ENCODE measurements at regions of chr5 and their contacts with region 1.

Region 1: DNA sequence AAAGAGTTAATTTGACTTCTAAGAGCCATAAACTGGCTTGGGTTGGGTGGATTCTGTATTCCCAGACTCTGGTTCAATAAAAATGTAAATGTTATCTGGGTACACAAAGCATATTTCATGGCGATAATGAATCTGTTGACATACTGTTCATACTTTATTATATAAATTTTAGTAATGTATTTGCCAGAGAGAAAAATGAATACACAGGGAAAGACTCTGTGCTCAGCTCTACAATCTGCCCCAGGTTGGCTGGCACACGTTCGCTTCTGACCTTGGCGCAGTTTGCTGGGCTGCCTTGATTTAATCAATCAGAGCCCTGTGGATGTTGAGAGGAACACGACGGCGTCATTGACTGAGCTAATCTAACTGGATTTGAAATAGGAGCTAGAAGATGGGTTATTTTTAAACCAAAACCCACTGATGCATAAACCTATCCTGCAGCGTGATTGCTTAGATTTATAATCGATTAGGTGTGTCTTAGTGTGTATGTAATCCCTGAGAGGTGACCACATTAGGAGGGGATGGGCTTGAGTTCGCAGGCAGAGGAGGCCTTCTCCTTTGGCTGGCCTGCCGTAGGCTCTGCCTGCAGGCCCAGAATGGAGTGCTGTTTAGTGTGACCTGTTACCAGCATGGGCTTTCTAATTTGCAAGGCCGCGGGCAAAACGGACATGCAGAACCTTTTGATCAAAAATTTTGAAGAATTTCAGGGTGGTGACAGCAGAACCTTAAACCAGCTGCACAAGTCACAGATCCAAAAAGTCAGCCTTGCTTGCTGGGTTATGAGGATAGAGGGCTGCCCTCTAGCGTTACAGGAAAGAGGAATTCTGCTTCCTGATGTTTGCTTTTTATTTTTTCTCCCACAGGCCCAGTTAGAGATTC is 3.9 kb upstream of the ADCY2 start:
- DNase-seq: no peak

Region 2: DNA sequence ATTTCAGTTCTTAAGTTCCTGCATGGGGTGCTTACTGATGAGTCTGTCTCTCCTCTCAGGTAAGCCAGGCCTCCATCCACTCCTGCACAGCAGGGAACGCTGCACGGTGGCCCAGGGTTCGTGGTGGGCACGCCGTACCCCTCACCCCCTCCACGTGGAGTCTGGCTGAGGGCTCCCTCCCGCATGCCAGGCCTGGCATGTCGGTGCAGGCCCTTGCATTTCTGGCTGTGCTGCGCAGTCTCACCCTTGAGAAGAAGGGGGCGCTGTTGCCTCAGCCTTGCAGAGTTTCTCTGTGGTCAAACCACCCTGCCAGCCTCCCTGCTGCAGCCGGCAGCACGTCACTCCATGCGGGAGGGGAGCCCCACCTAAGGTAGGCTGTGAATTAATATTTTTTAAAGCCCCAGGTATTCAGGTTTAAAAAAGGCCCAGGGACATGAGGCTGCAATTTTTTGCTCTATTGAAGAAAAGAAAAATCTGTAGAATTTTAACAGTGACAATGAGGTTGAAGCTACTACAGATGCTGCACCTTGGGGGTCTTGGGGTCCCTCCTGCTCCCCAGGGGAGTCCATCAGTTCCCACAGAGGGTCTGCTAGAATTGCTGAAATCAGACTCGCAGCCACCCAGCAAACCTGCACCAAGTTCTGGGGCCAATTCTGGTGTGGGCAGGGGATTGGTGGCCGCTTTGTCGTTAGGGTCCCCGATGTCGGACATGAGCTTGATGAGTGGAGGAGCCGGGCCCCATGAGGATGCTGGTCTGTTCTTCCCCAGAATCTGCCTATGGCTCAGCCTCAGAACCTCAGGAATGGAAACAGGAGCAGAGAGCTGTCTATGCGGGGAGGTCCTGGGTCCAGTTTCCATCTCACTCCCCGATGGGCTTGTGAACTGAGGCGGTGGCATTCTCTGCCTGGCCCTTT is 626.2 kb before region 1 on chr5:
- intact Hi-C with region 1: loop called in 1 of 2 experiments (anchors 10 kb)
- DNase-seq: peak; percentile 93

Region 3: GRCh38 chr5:7124959-7125358 is 267.1 kb before region 1 on chr5:
- intact Hi-C with region 1: no loop called
- DNase-seq: no peak

Region 4: GRCh38 chr5:7317751-7318150 is 74.3 kb before region 1 on chr5:
- intact Hi-C with region 1: no loop called
- DNase-seq: no peak

Region 5: DNA sequence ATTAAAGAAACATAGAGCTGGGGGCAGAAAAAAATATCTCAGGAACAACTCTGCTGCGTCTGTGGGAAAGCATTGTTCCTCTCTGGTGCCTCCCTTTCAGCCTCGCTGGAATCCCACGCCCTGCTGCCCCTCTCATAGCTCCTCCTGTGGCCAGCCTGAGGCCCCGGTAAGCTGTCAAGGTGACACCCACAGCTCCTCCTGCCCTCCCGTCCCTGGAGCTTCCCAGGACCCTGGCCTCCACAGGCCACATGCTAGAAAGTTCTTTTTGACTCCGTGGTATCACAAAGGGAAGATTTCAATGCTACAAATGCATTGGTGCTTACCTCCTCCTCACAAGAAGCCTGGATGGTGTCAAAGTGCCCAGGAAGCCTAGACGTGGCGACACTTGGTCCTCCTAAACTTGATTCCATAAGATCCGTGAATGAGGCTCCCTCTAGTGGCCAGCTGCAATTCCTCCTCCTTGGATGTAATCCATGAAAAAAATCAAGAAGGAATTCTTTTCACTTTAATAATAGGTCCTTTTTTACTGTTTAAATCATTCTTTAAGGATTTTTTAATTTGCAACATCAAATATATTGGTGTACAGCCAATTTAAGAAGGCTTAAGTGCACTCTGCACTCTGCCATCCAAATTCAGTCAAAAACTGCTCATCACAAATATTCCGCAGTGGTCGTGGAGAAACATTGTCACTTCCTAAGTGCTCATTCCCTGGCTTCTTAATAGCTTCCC is 354.0 kb after region 1 on chr5:
- intact Hi-C with region 1: loop called (anchors 10 kb)
- DNase-seq: peak; percentile 89

Region 6: GRCh38 chr5:7815892-7816534 is 424.0 kb after region 1 on chr5:
- intact Hi-C with region 1: loop called (anchors 10 kb)
- DNase-seq: peak; percentile 94

Region 7: GRCh38 chr5:7827610-7828009 is 435.6 kb after region 1 on chr5:
- intact Hi-C with region 1: loop called in 1 of 2 experiments (anchors 10 kb)
- DNase-seq: no peak

Measured in posterior vena cava (tissue), 2 donors.